ENCODE measurements at regions of chr15 and their contacts with region 1.

Region 1: GRCh38 chr15:89299896-89300295 is 34.7 kb downstream of the POLG start:
- DNase-seq: no peak
- ATAC-seq: no peak

Region 2: GRCh38 chr15:89206908-89207331 is 93.0 kb before region 1 on chr15:
- intact Hi-C with region 1: loop called in 1 of 2 experiments (anchors 5 kb)
- DNase-seq: peak; percentile 78
- ATAC-seq: peak; percentile 84 to 92

Measured in left cardiac atrium (tissue), 4 donors.